ENCODE measurements at regions of chr19 and their contacts with region 1.

Region 1: DNA sequence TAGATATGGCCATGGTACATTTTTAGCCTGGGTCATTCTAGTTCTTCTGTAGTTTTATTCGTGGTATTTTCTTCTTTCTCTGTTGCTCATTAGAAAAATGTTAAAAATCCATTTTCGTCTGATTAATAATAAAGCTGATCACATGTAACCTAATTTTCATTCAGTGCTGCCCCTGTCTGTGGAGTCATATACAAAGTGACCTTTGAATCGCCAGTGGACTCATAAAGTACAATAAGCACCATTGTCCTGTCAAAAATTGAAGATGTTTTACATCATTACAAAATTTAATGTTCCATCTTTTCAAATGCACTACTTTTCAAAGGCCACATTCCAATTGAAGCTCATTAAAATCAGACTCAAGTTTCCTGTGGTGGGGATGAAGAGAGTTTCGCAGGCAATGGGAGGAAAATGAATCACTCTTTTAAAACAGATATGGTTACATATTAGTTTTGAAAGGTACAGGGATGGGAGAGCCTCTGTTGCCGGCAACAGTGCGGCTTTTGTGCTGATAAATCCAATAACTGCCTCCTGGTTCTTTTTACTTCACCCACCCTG is 205.4 kb downstream of the ZNF536 start:
- DNase-seq: no peak
- ATAC-seq: no peak
- H3K4me3 ChIP-seq: no peak overlapping the region
- H3K4me3 Mint-ChIP-seq: no peak overlapping the region
- H3K27ac ChIP-seq: no peak overlapping the region
- H3K27ac Mint-ChIP-seq: no peak overlapping the region
- H3K4me1 ChIP-seq: no peaks in the 10 kb centered on the region
- H3K4me1 Mint-ChIP-seq: no peaks in the 10 kb centered on the region
- H3K27me3 ChIP-seq: peaks cover 0 to 10% of the 10 kb centered on the region in 2 experiments
- H3K27me3 Mint-ChIP-seq: peaks cover 6 to 7% of the 10 kb centered on the region in 2 donors

Region 2: GRCh38 chr19:30224689-30225606 is 352.7 kb before region 1 on chr19:
- CTCF ChIA-PET with region 1: no interaction called
- POLR2A ChIA-PET with region 1: interaction called in 1 of 2 experiments, 11 read pairs
- DNase-seq: no peak
- ATAC-seq: no peak
- H3K4me3 ChIP-seq: peak overlapping the region in 1 of 2 donors; percentile 5
- H3K4me3 Mint-ChIP-seq: peak overlapping the region; percentile 53 to 84 (median 62)
- H3K27ac ChIP-seq: no peak overlapping the region
- H3K27ac Mint-ChIP-seq: peak overlapping the region in 1 of 2 donors; percentile 4
- H3K4me1 ChIP-seq: peaks cover 3 to 23% of the 10 kb centered on the region in 2 experiments
- H3K4me1 Mint-ChIP-seq: peaks cover 20 to 42% (median 33%) of the 10 kb centered on the region in 3 donors
- H3K27me3 ChIP-seq: peaks cover 30 to 62% of the 10 kb centered on the region in 2 experiments
- H3K27me3 Mint-ChIP-seq: peaks cover 51 to 73% of the 10 kb centered on the region in 2 donors

Region 3: DNA sequence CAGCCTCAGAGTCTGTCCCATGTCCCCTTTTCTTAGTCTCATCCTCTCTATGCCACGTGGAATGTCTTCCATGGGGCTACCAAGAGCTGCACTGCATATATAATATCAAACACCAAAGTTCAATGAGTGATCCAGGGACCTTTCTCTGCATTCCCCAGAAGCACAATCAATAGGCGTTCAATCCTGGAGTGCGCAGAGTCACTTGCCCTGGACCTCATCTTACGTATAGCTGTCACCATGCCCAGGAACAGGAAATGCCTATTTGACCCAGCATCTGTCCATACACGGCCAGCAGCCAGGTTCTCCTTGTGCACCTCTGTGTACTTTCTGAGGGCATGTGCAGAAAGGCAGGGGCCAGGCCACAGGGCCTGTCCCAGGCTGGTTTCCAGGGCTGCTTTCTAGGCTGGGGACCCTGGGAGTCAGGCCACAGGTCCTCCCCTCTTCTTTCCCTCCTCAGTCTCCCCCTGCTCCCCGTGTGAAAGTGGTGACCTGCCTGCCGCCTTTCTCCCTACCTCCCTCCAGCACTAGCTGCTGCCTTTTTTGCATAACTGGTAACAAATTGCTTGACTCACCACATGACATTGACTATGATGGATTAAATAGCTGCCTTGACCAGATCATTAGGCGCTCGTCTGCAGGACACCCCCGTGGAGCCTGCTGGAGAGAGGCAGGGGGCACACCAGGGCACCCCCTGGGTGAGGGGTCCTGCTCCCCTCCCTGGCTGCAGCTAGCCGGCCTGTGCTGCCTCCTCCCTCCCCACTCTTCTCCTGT is 16.5 kb after region 1 on chr19:
- CTCF ChIA-PET with region 1: no interaction called
- POLR2A ChIA-PET with region 1: no interaction called
- DNase-seq: no peak
- ATAC-seq: no peak
- H3K4me3 ChIP-seq: no peak overlapping the region
- H3K4me3 Mint-ChIP-seq: no peak overlapping the region
- H3K27ac ChIP-seq: no peak overlapping the region
- H3K27ac Mint-ChIP-seq: no peak overlapping the region
- H3K4me1 ChIP-seq: no peaks in the 10 kb centered on the region
- H3K4me1 Mint-ChIP-seq: no peaks in the 10 kb centered on the region
- H3K27me3 ChIP-seq: peaks cover 0 to 15% of the 10 kb centered on the region in 2 experiments
- H3K27me3 Mint-ChIP-seq: peaks cover 2 to 11% of the 10 kb centered on the region in 2 donors